ENCODE measurements at regions of chr5 and their contacts with region 1.

Region 1: DNA sequence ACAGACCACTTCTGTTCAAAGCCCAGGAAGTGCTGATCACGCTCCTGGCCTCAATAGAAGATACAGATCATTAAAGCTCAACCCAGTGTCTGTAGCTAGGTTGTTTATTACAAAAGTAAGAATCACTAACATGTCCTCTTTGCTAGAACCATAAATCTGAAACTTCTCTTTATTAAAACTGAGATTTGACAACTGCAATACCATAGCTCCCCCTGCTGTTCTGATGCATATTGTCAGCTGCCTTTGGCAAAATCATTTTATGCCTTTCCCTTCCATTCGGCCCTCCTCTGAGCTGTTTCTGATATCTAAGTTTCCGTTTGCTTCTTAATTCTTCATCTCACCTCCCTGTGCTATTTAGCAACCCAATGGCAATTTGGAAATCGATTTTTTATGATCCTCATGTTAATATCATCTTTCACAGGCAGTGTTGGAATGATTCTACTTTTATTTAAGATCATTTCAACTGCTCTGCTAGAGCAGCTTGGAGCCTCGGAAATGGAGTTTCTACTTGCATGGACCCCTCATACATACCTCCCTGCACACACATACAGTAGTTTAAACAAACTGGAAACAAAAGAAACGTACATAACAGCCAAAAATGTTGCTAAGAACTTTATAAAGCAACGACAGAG is 998.8 kb downstream of the MAT2B start:
- DNase-seq: peak in 1 of 9 donors; percentile 0
- ATAC-seq: peak; percentile 56
- H3K4me3 ChIP-seq: no peak overlapping the region
- H3K4me3 Mint-ChIP-seq: no peak overlapping the region
- H3K27ac ChIP-seq: no peak overlapping the region
- H3K27ac Mint-ChIP-seq: no peak overlapping the region
- H3K4me1 ChIP-seq: no peaks in the 10 kb centered on the region
- H3K4me1 Mint-ChIP-seq: no peaks in the 10 kb centered on the region
- H3K27me3 ChIP-seq: no peaks in the 10 kb centered on the region
- H3K27me3 Mint-ChIP-seq: no peaks in the 10 kb centered on the region

Region 2: DNA sequence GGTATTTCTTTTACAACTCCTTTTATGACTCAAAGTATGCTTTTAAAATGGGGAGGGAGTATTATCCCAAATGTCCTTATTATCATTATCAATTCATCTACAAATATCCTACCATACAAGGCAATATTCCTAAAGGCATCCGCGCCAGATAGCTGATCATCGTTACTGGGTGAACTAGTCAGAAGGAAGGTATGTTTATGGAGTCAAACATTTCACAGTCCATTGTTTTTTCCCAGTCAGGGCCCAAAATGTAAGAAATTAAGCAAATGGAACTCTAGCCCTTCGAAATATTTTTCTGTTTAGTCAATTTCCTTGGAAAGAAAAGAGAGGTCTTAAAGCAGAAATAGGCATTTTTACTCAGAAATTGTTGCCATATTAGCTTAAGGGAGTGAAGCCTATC is 1255.4 kb before region 1 on chr5:
- CTCF ChIA-PET with region 1: no interaction called
- POLR2A ChIA-PET with region 1: no interaction called
- intact Hi-C with region 1: no loop called
- DNase-seq: no peak
- ATAC-seq: no peak
- H3K4me3 ChIP-seq: no peak overlapping the region
- H3K4me3 Mint-ChIP-seq: no peak overlapping the region
- H3K27ac ChIP-seq: no peak overlapping the region
- H3K27ac Mint-ChIP-seq: no peak overlapping the region
- H3K4me1 ChIP-seq: no peaks in the 10 kb centered on the region
- H3K4me1 Mint-ChIP-seq: no peaks in the 10 kb centered on the region
- H3K27me3 ChIP-seq: no peaks in the 10 kb centered on the region
- H3K27me3 Mint-ChIP-seq: peaks cover 0 to 7% (median 0%) of the 10 kb centered on the region in 5 donors

Region 3: GRCh38 chr5:163695830-163696578 is 808.3 kb before region 1 on chr5:
- CTCF ChIA-PET with region 1: no interaction called
- POLR2A ChIA-PET with region 1: no interaction called
- intact Hi-C with region 1: loop called in 1 of 2 experiments (anchors 2 kb)
- DNase-seq: no peak
- ATAC-seq: peak; percentile 75
- H3K4me3 ChIP-seq: no peak overlapping the region
- H3K4me3 Mint-ChIP-seq: no peak overlapping the region
- H3K27ac ChIP-seq: no peak overlapping the region
- H3K27ac Mint-ChIP-seq: no peak overlapping the region
- H3K4me1 ChIP-seq: no peaks in the 10 kb centered on the region
- H3K4me1 Mint-ChIP-seq: no peaks in the 10 kb centered on the region
- H3K27me3 ChIP-seq: no peaks in the 10 kb centered on the region
- H3K27me3 Mint-ChIP-seq: peaks cover 0 to 8% (median 3%) of the 10 kb centered on the region in 5 donors

Region 4: GRCh38 chr5:163747586-163747985 is 756.7 kb before region 1 on chr5:
- CTCF ChIA-PET with region 1: no interaction called
- POLR2A ChIA-PET with region 1: no interaction called
- intact Hi-C with region 1: no loop called
- DNase-seq: no peak
- ATAC-seq: no peak
- H3K4me3 ChIP-seq: no peak overlapping the region
- H3K4me3 Mint-ChIP-seq: no peak overlapping the region
- H3K27ac ChIP-seq: no peak overlapping the region
- H3K27ac Mint-ChIP-seq: no peak overlapping the region
- H3K4me1 ChIP-seq: no peaks in the 10 kb centered on the region
- H3K4me1 Mint-ChIP-seq: no peaks in the 10 kb centered on the region
- H3K27me3 ChIP-seq: no peaks in the 10 kb centered on the region
- H3K27me3 Mint-ChIP-seq: peaks cover 0 to 7% (median 0%) of the 10 kb centered on the region in 5 donors

Region 5: GRCh38 chr5:164013077-164013670 is 491.1 kb before region 1 on chr5:
- CTCF ChIA-PET with region 1: no interaction called
- POLR2A ChIA-PET with region 1: no interaction called
- intact Hi-C with region 1: loop called in 1 of 2 experiments (anchors 1 kb)
- DNase-seq: peak in 1 of 9 donors; percentile 22
- ATAC-seq: peak; percentile 41
- H3K4me3 ChIP-seq: no peak overlapping the region
- H3K4me3 Mint-ChIP-seq: no peak overlapping the region
- H3K27ac ChIP-seq: no peak overlapping the region
- H3K27ac Mint-ChIP-seq: no peak overlapping the region
- H3K4me1 ChIP-seq: no peaks in the 10 kb centered on the region
- H3K4me1 Mint-ChIP-seq: peaks cover 0 to 3% (median 0%) of the 10 kb centered on the region in 7 donors
- H3K27me3 ChIP-seq: no peaks in the 10 kb centered on the region
- H3K27me3 Mint-ChIP-seq: no peaks in the 10 kb centered on the region

Region 6: DNA sequence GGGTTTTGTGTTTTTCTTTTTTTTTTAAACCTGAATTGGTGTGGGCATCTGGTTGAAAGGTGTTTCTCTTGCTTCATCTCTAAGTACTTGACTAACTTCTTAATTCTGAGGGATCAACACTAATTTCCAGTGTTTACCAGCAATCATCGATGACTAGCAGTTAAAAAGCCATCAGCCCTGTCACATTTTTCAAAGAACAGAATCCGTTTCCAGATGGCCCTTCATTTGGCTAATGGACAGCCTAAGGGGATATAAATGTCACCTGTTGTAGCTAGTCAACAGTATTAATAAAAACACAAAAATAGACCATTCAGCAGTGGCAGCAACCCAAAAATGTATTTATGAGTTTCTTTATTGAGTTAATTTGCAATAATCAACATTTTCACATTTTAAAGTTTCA is 77.6 kb after region 1 on chr5:
- CTCF ChIA-PET with region 1: no interaction called
- POLR2A ChIA-PET with region 1: no interaction called
- intact Hi-C with region 1: no loop called
- DNase-seq: no peak
- ATAC-seq: no peak
- H3K4me3 ChIP-seq: no peak overlapping the region
- H3K4me3 Mint-ChIP-seq: no peak overlapping the region
- H3K27ac ChIP-seq: no peak overlapping the region
- H3K27ac Mint-ChIP-seq: no peak overlapping the region
- H3K4me1 ChIP-seq: no peaks in the 10 kb centered on the region
- H3K4me1 Mint-ChIP-seq: no peaks in the 10 kb centered on the region
- H3K27me3 ChIP-seq: no peaks in the 10 kb centered on the region
- H3K27me3 Mint-ChIP-seq: no peaks in the 10 kb centered on the region